ENCODE measurements at regions of chr4 and their contacts with region 1.

Region 1: GRCh38 chr4:173420324-173420752 is 21.4 kb upstream of the SCRG1 start:
- DNase-seq: peak in 2 of 9 experiments; percentile 14 to 41
- ATAC-seq: peak; percentile 44
- H3K4me3 ChIP-seq: no peak overlapping the region
- H3K4me3 Mint-ChIP-seq: no peak overlapping the region
- H3K27ac ChIP-seq: no peak overlapping the region
- H3K27ac Mint-ChIP-seq: no peak overlapping the region
- H3K4me1 ChIP-seq: peaks cover 5% of the 10 kb centered on the region
- H3K4me1 Mint-ChIP-seq: peaks cover 7% of the 10 kb centered on the region
- H3K27me3 ChIP-seq: no peaks in the 10 kb centered on the region
- H3K27me3 Mint-ChIP-seq: peaks cover 4% of the 10 kb centered on the region
- CTCF ChIP-seq: peak; percentile 57

Region 2: GRCh38 chr4:173025131-173025530 is 395.2 kb before region 1 on chr4:
- CTCF ChIA-PET with region 1: no interaction called
- POLR2A ChIA-PET with region 1: no interaction called
- intact Hi-C with region 1: loop called in 1 of 2 experiments (anchors 5 kb)
- DNase-seq: peak in 3 of 9 experiments; percentile 16 to 61 (median 42)
- ATAC-seq: peak; percentile 44
- H3K4me3 ChIP-seq: no peak overlapping the region
- H3K4me3 Mint-ChIP-seq: no peak overlapping the region
- H3K27ac ChIP-seq: no peak overlapping the region
- H3K27ac Mint-ChIP-seq: no peak overlapping the region
- H3K4me1 ChIP-seq: no peaks in the 10 kb centered on the region
- H3K4me1 Mint-ChIP-seq: peaks cover 4% of the 10 kb centered on the region
- H3K27me3 ChIP-seq: no peaks in the 10 kb centered on the region
- H3K27me3 Mint-ChIP-seq: peaks cover 2% of the 10 kb centered on the region
- CTCF ChIP-seq: peak; percentile 51

Region 3: GRCh38 chr4:173318648-173319211 is 101.6 kb before region 1 on chr4:
- CTCF ChIA-PET with region 1: interaction called, 170 read pairs
- POLR2A ChIA-PET with region 1: interaction called, 4 read pairs
- intact Hi-C with region 1: loop called (anchors 1 kb)
- DNase-seq: peak in 2 of 9 experiments; percentile 48 to 60
- ATAC-seq: peak; percentile 66
- H3K4me3 ChIP-seq: no peak overlapping the region
- H3K4me3 Mint-ChIP-seq: no peak overlapping the region
- H3K27ac ChIP-seq: no peak overlapping the region
- H3K27ac Mint-ChIP-seq: no peak overlapping the region
- H3K4me1 ChIP-seq: no peaks in the 10 kb centered on the region
- H3K4me1 Mint-ChIP-seq: no peaks in the 10 kb centered on the region
- H3K27me3 ChIP-seq: no peaks in the 10 kb centered on the region
- H3K27me3 Mint-ChIP-seq: no peaks in the 10 kb centered on the region
- CTCF ChIP-seq: peak; percentile 66

Region 4: DNA sequence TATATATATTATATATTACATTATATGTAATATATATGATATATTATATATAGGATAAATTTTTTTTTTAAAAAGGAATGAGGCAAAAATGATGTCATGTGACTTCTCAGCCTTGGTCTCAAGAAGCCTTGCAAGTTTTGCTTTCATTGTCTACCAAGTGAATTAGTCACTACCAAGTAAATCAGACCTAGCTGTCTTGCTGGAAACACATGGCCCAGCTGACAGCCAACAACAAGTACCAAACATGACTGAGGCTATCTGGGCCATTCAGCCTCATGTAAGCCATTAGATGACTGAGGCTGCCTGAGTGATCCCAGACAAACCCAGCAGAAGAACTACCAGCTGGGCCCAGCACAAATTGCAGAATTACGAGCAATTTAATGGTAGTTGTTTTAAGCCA is 64.8 kb after region 1 on chr4:
- CTCF ChIA-PET with region 1: interaction called, 14 read pairs
- POLR2A ChIA-PET with region 1: no interaction called
- intact Hi-C with region 1: no loop called
- DNase-seq: no peak
- ATAC-seq: no peak
- H3K4me3 ChIP-seq: no peak overlapping the region
- H3K4me3 Mint-ChIP-seq: no peak overlapping the region
- H3K27ac ChIP-seq: no peak overlapping the region
- H3K27ac Mint-ChIP-seq: no peak overlapping the region
- H3K4me1 ChIP-seq: no peaks in the 10 kb centered on the region
- H3K4me1 Mint-ChIP-seq: no peaks in the 10 kb centered on the region
- H3K27me3 ChIP-seq: no peaks in the 10 kb centered on the region
- H3K27me3 Mint-ChIP-seq: no peaks in the 10 kb centered on the region
- CTCF ChIP-seq: no peak

Region 5: DNA sequence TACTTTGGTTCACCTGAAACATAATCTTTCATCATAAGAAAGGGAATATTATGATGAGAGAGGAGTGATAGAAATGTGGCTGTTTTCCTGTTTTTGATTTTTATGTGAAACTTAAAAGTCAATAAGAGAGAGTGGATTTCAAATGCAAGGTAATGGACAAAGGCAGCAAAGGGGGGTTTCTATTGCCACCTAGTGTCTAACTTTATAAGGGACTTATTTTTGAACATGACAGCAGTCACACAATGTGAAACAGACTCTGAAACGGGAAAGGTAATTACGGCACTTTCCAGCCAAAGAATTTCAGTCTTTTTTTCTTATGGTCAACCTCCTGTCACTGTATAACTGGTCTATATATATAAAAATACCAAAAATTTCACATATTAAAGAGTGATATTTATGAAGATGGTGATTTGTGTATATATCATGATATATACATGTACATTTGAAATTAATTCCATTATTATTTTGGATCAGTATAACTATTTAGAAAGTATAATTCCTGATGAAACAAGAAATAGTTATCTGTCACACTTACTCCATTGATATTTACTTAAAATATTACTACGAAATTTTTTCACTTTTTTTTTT is 736.0 kb after region 1 on chr4:
- CTCF ChIA-PET with region 1: no interaction called
- POLR2A ChIA-PET with region 1: no interaction called
- intact Hi-C with region 1: loop called in 1 of 2 experiments (anchors 2 kb)
- DNase-seq: peak in 2 of 9 experiments; percentile 25 to 29
- ATAC-seq: no peak
- H3K4me3 ChIP-seq: no peak overlapping the region
- H3K4me3 Mint-ChIP-seq: no peak overlapping the region
- H3K27ac ChIP-seq: no peak overlapping the region
- H3K27ac Mint-ChIP-seq: no peak overlapping the region
- H3K4me1 ChIP-seq: no peaks in the 10 kb centered on the region
- H3K4me1 Mint-ChIP-seq: no peaks in the 10 kb centered on the region
- H3K27me3 ChIP-seq: peaks cover 0 to 3% of the 10 kb centered on the region in 2 experiments
- H3K27me3 Mint-ChIP-seq: peaks cover 18% of the 10 kb centered on the region
- CTCF ChIP-seq: peak; percentile 57